WTC11 (cell line): ENCODE measurements at regions of chr2 and their contacts with region 1.

Region 1: DNA sequence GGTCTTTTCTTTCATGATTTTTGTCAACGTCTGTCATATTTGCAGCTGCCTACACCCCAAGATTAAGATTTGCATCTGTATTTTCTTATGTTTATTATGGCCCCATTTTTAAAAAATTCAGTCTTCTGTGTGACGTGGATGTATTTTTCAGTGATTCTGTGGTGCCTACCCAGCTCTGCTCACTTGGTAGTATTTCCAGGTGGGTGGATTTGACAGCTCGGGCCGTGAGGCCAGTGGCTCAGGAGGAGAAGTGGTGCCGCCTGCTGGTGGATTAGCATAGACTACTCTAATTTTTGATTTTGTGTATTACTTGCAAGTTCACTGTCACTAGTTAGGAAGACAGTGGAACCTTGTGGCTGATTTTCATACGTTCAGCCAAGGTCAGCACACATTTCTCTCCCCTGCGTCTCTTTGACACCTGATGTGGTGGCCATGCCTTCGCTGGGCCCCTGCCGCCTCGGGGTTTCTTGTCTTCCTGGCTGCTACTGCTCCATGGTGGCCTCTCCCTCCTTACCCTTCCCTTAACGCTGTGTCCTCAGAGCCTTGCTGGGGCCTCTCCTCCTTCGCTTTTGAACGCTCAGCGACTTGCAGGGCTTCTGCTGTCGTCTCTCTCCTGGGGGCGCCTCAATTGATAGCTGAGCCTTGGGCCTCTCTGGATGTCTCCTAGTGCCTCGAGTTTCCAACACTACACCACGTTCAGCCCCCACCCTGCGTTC is 89.3 kb downstream of the DGKD start:
- DNase-seq: peak; percentile 80
- ATAC-seq: peak; percentile 66
- H3K4me3 Mint-ChIP-seq: no peak overlapping the region
- H3K27ac Mint-ChIP-seq: no peak overlapping the region
- H3K4me1 Mint-ChIP-seq: peaks cover 4% of the 10 kb centered on the region
- H3K27me3 Mint-ChIP-seq: no peaks in the 10 kb centered on the region
- CTCF ChIP-seq: peak; percentile 71

Region 2: GRCh38 chr2:233209533-233210171 is 234.0 kb before region 1 on chr2:
- CTCF ChIA-PET with region 1: no interaction called
- POLR2A ChIA-PET with region 1: no interaction called
- DNase-seq: no peak
- ATAC-seq: peak; percentile 60
- H3K4me3 Mint-ChIP-seq: peak overlapping the region; percentile 37
- H3K27ac Mint-ChIP-seq: peak overlapping the region; percentile 95
- H3K4me1 Mint-ChIP-seq: peaks cover 43% of the 10 kb centered on the region
- H3K27me3 Mint-ChIP-seq: no peaks in the 10 kb centered on the region
- CTCF ChIP-seq: no peak

Region 3: DNA sequence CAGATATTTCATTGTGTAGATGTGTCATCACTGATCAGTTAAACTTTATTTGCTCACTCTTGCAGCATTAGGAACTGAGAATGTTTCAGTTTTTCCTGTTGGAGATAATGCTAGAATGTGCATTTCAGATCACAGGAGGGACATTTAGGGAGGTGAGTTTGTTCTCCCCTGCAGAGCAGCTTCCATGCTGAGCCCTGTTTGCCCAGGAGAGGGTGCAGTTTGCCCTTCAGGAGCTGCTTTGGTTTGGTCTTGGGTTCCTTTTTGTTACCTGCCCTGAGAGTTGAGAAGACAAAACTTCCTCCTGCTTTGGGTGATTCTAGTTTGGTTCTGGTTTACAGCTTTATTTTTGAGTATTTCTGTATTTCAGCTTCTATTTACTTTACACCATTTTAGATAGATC is 39.4 kb before region 1 on chr2:
- CTCF ChIA-PET with region 1: interaction called, 32 read pairs
- POLR2A ChIA-PET with region 1: no interaction called
- DNase-seq: peak; percentile 51
- ATAC-seq: peak; percentile 61
- H3K4me3 Mint-ChIP-seq: no peak overlapping the region
- H3K27ac Mint-ChIP-seq: no peak overlapping the region
- H3K4me1 Mint-ChIP-seq: peaks cover 27% of the 10 kb centered on the region
- H3K27me3 Mint-ChIP-seq: no peaks in the 10 kb centered on the region
- CTCF ChIP-seq: no peak; the same call in 1 of the 2 replicates